ENCODE measurements at regions of chr1 and their contacts with region 1.

Region 1: GRCh38 chr1:21490774-21491553 is 18.3 kb upstream of the ALPL start:
- DNase-seq: peak; percentile 41
- ATAC-seq: peak; percentile 91
- H3K4me3 ChIP-seq: no peak overlapping the region
- H3K27ac ChIP-seq: no peak overlapping the region
- H3K4me1 ChIP-seq: 0 out of 2 replicates have a peak, but pooled peaks cover 6% of the 10 kb centered on the region
- H3K27me3 ChIP-seq: peaks cover 0 to 3% of the 10 kb centered on the region in 2 experiments; a peak in 1 of 5 replicates
- CTCF ChIP-seq: peak; percentile 84
- EP300 ChIP-seq: no peak
- POLR2A ChIP-seq: no peak
- RAD21 ChIP-seq: peak; percentile 60; the same call in 1 of the 2 replicates

Region 2: GRCh38 chr1:21232044-21232443 is 258.9 kb before region 1 on chr1:
- CTCF ChIA-PET with region 1: no interaction called
- POLR2A ChIA-PET with region 1: no interaction called
- in situ Hi-C with region 1: loop called (anchors 25 kb)
- intact Hi-C with region 1: loop called (anchors 10 kb)
- DNase-seq: peak; percentile 56
- ATAC-seq: peak; percentile 79
- H3K4me3 ChIP-seq: no peak overlapping the region
- H3K27ac ChIP-seq: no peak overlapping the region
- H3K4me1 ChIP-seq: peaks cover 6% of the 10 kb centered on the region; the same call in 1 of the 2 replicates
- H3K27me3 ChIP-seq: no peaks in the 10 kb centered on the region
- CTCF ChIP-seq: peak; percentile 87
- EP300 ChIP-seq: no peak
- POLR2A ChIP-seq: no peak
- RAD21 ChIP-seq: peak; percentile 84